ENCODE measurements at regions of chr16 and their contacts with region 1.

Region 1: GRCh38 chr16:89507834-89508590 is at the start of gene SPG7:
- DNase-seq: peak; percentile 74 to 90
- ATAC-seq: peak; percentile 80
- total RNA-seq, gene SPG7: 106 to 146 TPM

Region 2: GRCh38 chr16:89343501-89344457 is 164.2 kb before region 1 on chr16:
- intact Hi-C with region 1: loop called in 1 of 2 experiments (anchors 10 kb)
- DNase-seq: peak in 1 of 2 donors; percentile 65
- ATAC-seq: peak; percentile 70

Region 3: GRCh38 chr16:89581045-89581690 is 73.2 kb after region 1 on chr16:
- intact Hi-C with region 1: no loop called
- DNase-seq: no peak
- ATAC-seq: no peak